ENCODE measurements at regions of chr9 and their contacts with region 1.

Region 1: GRCh38 chr9:5593904-5594303 is 35.0 kb upstream of the RIC1 start:
- DNase-seq: no peak
- ATAC-seq: no peak
- H3K4me3 ChIP-seq: no peak overlapping the region
- H3K27ac ChIP-seq: no peak overlapping the region
- H3K4me1 ChIP-seq: no peaks in the 10 kb centered on the region
- CTCF ChIP-seq: no peak
- EP300 ChIP-seq: no peak
- POLR2A ChIP-seq: no peak
- RAD21 ChIP-seq: no peak

Region 2: DNA sequence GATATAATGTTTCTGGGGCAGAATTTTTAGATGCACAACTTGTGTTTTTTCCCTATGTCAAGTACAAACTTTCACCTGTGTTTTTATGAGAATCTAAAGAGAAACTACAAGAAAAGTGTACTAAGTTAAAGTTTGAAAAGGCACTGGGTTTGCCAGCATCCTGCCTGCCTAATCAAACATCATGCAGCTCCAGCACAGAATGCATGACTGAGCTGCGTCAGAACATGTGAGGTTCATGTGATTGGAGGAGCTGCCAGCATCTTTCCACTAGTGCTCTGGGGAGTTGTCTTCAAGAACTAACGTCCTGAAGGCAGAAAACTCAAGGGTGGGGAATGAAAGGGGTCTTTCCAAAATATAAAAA is 11.1 kb before region 1 on chr9:
- CTCF ChIA-PET with region 1: interaction called, 25 read pairs
- POLR2A ChIA-PET with region 1: no interaction called
- DNase-seq: no peak
- ATAC-seq: peak; percentile 82 to 89
- H3K4me3 ChIP-seq: no peak overlapping the region
- H3K27ac ChIP-seq: 0 out of 6 replicates have a peak overlapping the region, but pooled peaks of 1 of the 2 experiments have one; percentile 3
- H3K4me1 ChIP-seq: peaks cover 8% of the 10 kb centered on the region; the same call in 2 of the 3 replicates
- CTCF ChIP-seq: no peak
- EP300 ChIP-seq: no peak
- POLR2A ChIP-seq: no peak
- RAD21 ChIP-seq: no peak

Region 3: GRCh38 chr9:5635390-5635789 is 41.5 kb after region 1 on chr9:
- CTCF ChIA-PET with region 1: no interaction called
- POLR2A ChIA-PET with region 1: no interaction called
- DNase-seq: no peak
- ATAC-seq: no peak
- H3K4me3 ChIP-seq: no peak overlapping the region
- H3K27ac ChIP-seq: no peak overlapping the region
- H3K4me1 ChIP-seq: peaks cover 35% of the 10 kb centered on the region
- CTCF ChIP-seq: no peak
- EP300 ChIP-seq: no peak
- POLR2A ChIP-seq: no peak
- RAD21 ChIP-seq: no peak

Region 4: GRCh38 chr9:5671711-5672353 is 77.9 kb after region 1 on chr9:
- CTCF ChIA-PET with region 1: no interaction called
- POLR2A ChIA-PET with region 1: no interaction called
- DNase-seq: no peak
- ATAC-seq: no peak
- H3K4me3 ChIP-seq: no peak overlapping the region
- H3K27ac ChIP-seq: no peak overlapping the region
- H3K4me1 ChIP-seq: no peaks in the 10 kb centered on the region
- CTCF ChIP-seq: no peak
- EP300 ChIP-seq: no peak
- POLR2A ChIP-seq: no peak
- RAD21 ChIP-seq: no peak

Measured in A549 (cell line).